Mammary epithelial cell (primary cell): ENCODE measurements at regions of chr12 and their contacts with region 1.

Region 1: GRCh38 chr12:6944381-6945186 is 762 bp downstream of the C12orf57 start:
- DNase-seq: no peak
- H3K4me3 ChIP-seq: peak overlapping the region; percentile 36 to 64 (median 47)
- H3K27ac ChIP-seq: peak overlapping the region; percentile 94
- H3K4me1 ChIP-seq: peaks cover 29% of the 10 kb centered on the region
- H3K27me3 ChIP-seq: no peaks in the 10 kb centered on the region
- CTCF ChIP-seq: peak; percentile 55 to 77

Region 2: DNA sequence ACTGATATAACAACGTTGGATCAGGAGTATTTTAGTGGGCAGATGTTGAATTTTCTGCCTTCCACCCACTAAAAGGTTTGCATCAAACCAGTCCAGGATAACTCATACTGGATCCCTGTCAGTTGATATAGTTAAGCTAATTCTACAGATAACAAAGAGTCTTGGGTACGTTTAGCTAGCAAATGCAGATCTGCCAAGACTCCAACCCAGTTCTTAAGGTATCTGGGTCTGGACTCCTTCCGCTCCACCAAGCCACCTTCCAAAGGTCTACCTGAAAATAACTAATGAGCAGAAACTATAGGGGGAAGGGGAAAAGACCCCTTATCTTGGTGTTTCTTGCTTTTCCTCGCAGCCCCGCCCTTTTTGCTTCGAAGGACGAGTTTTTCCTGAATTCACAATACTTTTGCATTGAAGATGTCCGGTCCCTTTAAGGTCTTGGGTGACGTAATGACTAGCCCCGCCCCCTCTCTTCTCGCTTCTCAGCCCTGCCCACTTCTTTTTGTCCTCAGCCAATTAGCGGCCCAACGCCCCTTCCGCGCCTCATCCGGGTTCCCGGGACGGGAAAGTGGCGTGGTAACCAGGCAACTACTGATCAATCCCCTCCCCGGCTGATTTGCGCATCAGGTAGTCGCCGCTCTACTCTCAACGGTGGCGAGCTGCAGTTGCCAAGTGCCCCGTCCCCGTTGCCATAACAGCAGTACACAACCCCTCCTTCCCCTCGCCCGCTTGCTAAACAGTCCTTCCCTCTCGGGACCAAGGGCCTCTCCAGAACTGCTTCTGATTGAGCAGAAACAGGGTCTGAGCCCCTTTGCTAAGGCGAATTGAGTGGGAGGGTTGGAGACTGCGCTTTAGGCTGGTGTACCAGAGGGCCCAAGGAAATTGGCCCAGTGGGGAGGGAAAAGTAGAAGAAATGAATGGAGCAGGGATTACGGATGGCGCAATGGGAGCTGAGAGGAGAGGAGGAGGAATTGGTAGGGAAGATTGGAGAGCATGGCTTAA is 40.0 kb before region 1 on chr12 and contains the start of gene LRRC23:
- CTCF ChIA-PET with region 1: interaction called, 5 read pairs
- dilution Hi-C with region 1: no loop called
- in situ Hi-C with region 1: no loop called
- intact Hi-C with region 1: loop called (anchors 1 kb)
- DNase-seq: peak; percentile 93
- H3K4me3 ChIP-seq: peak within 1 kb of the TSS; percentile 69 to 78 (median 73)
- H3K27ac ChIP-seq: peak within 1 kb of the TSS; percentile 91
- H3K4me1 ChIP-seq: peaks cover 9% of the 10 kb centered on the region
- H3K27me3 ChIP-seq: no peaks in the 10 kb centered on the region
- CTCF ChIP-seq: no peak
- total RNA-seq, gene LRRC23: 4.3 to 4.7 TPM

Region 3: GRCh38 chr12:7042842-7043241 is 98.3 kb after region 1 on chr12:
- CTCF ChIA-PET with region 1: no interaction called
- dilution Hi-C with region 1: no loop called
- in situ Hi-C with region 1: no loop called
- intact Hi-C with region 1: loop called (anchors 1 kb)
- DNase-seq: peak; percentile 52
- H3K4me3 ChIP-seq: no peak overlapping the region
- H3K27ac ChIP-seq: no peak overlapping the region
- H3K4me1 ChIP-seq: peaks cover 13% of the 10 kb centered on the region
- H3K27me3 ChIP-seq: no peaks in the 10 kb centered on the region
- CTCF ChIP-seq: peak; percentile 40 to 56

Region 4: GRCh38 chr12:7108796-7109571 is 164.4 kb after region 1 on chr12 and contains the start of gene C1RL:
- CTCF ChIA-PET with region 1: interaction called, 4 read pairs
- dilution Hi-C with region 1: no loop called
- in situ Hi-C with region 1: no loop called
- intact Hi-C with region 1: loop called (anchors 1 kb)
- DNase-seq: peak; percentile 75
- H3K4me3 ChIP-seq: peak within 1 kb of the TSS; percentile 75 to 80 (median 76)
- H3K27ac ChIP-seq: peak within 1 kb of the TSS; percentile 81
- H3K4me1 ChIP-seq: peaks cover 23% of the 10 kb centered on the region
- H3K27me3 ChIP-seq: no peaks in the 10 kb centered on the region
- CTCF ChIP-seq: peak; percentile 96 to 99
- total RNA-seq, gene C1RL: 32.1 to 38.3 TPM